PC-9 (cell line): ENCODE measurements at regions of chr10 and their contacts with region 1.

Region 1: GRCh38 chr10:25080880-25081581 is 64.6 kb downstream of the THNSL1 start:
- DNase-seq: peak; percentile 59 to 79
- H3K4me3 ChIP-seq: no peak overlapping the region
- H3K27ac ChIP-seq: no peak overlapping the region
- H3K4me1 ChIP-seq: no peaks in the 10 kb centered on the region
- H3K27me3 ChIP-seq: no peaks in the 10 kb centered on the region
- CTCF ChIP-seq: peak; percentile 86

Region 2: GRCh38 chr10:24617771-24618391 is 463.1 kb before region 1 on chr10:
- CTCF ChIA-PET with region 1: interaction called, 3 read pairs
- POLR2A ChIA-PET with region 1: no interaction called
- intact Hi-C with region 1: loop called (anchors 1 kb)
- DNase-seq: peak in 1 of 2 experiments; percentile 42
- H3K4me3 ChIP-seq: no peak overlapping the region
- H3K27ac ChIP-seq: peak overlapping the region; percentile 71
- H3K4me1 ChIP-seq: peaks cover 8% of the 10 kb centered on the region; the same call in 1 of the 2 replicates
- H3K27me3 ChIP-seq: no peaks in the 10 kb centered on the region
- CTCF ChIP-seq: peak; percentile 81

Region 3: DNA sequence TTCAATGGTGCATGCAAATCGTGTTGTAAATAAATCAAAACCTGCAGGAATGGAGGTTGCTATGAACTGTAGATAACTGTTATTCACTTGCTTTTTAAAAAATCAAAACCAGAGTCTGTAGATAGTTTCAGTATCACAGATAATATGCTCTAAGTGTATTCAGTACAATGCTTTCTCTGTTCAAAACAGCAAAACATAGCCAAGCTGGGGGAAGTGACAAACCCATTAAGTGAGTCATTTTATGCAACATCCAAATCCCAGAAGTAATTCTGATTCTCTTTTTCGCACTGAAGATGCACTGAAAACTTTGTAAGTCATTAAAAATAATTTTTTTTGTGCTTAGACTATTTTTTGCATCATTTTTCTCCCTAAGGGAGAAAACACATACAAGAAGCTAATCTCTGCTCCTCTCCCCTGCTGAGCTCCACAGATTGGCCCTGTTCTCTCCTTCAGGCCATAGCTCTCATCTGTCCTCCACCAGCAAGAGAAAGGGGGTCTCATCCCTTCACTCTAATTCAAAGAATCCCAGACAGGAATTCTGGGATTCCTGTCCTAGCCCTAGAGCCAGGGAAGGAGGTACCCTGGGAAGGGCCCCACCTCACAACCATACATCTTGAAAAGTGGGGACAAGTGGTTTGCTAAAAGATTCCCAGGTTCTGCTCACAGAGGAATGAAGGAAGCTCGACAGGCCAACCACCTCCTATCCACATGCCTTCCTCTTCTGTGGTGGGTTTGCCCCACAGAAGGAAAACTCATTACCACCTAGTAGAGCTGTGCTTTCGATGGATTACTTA is 133.5 kb before region 1 on chr10:
- CTCF ChIA-PET with region 1: no interaction called
- POLR2A ChIA-PET with region 1: no interaction called
- intact Hi-C with region 1: no loop called
- DNase-seq: no peak
- H3K4me3 ChIP-seq: no peak overlapping the region
- H3K27ac ChIP-seq: no peak overlapping the region
- H3K4me1 ChIP-seq: no peaks in the 10 kb centered on the region
- H3K27me3 ChIP-seq: no peaks in the 10 kb centered on the region
- CTCF ChIP-seq: no peak

Region 4: GRCh38 chr10:24989867-24990266 is 91.2 kb before region 1 on chr10:
- CTCF ChIA-PET with region 1: interaction called, 4 read pairs
- POLR2A ChIA-PET with region 1: no interaction called
- intact Hi-C with region 1: loop called (anchors 1 kb)
- DNase-seq: no peak
- H3K4me3 ChIP-seq: no peak overlapping the region
- H3K27ac ChIP-seq: no peak overlapping the region
- H3K4me1 ChIP-seq: no peaks in the 10 kb centered on the region
- H3K27me3 ChIP-seq: no peaks in the 10 kb centered on the region
- CTCF ChIP-seq: peak; percentile 43; the same call in 1 of the 2 replicates

Region 5: GRCh38 chr10:25016376-25017154 is 64.5 kb before region 1 on chr10 and contains the start of gene THNSL1:
- CTCF ChIA-PET with region 1: no interaction called
- POLR2A ChIA-PET with region 1: no interaction called
- intact Hi-C with region 1: loop called (anchors 2 kb)
- DNase-seq: peak; percentile 93 to 97
- H3K4me3 ChIP-seq: peak within 1 kb of the TSS; percentile 80
- H3K27ac ChIP-seq: peak within 1 kb of the TSS; percentile 92
- H3K4me1 ChIP-seq: peaks cover 15% of the 10 kb centered on the region; the same call in 1 of the 2 replicates
- H3K27me3 ChIP-seq: no peaks in the 10 kb centered on the region
- CTCF ChIP-seq: no peak
- total RNA-seq, gene THNSL1: 5.6 and 6.8 TPM in 2 replicates

Region 6: DNA sequence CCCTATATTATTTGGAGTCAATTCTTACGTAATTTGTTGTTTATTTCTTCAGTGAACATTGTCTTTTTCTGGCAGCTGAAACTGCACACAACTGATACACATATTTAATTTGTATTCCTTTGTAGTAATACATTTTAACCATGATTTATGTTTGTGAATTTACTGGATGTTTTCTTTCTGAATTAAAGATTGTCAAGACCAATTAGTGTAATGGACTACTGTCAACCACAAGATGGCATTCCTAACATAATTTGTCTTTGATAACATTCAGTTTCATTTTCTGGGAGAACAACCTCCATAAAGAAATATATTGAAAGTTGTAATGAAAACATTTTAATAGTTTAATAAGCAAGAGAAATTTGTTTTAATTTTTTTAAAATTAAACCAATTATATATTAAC is 54.6 kb before region 1 on chr10:
- CTCF ChIA-PET with region 1: interaction called, 3 read pairs
- POLR2A ChIA-PET with region 1: no interaction called
- intact Hi-C with region 1: loop called (anchors 1 kb)
- DNase-seq: no peak
- H3K4me3 ChIP-seq: no peak overlapping the region
- H3K27ac ChIP-seq: no peak overlapping the region
- H3K4me1 ChIP-seq: no peaks in the 10 kb centered on the region; the same call in 1 of the 2 replicates
- H3K27me3 ChIP-seq: no peaks in the 10 kb centered on the region
- CTCF ChIP-seq: peak; percentile 48; the same call in 1 of the 2 replicates